Calu3 (cell line): ENCODE measurements at regions of chr4 and their contacts with region 1.

Region 1: GRCh38 chr4:183398227-183399125 is 46.0 kb upstream of the CDKN2AIP start:
- DNase-seq: peak; percentile 78
- H3K4me3 Mint-ChIP-seq: peak overlapping the region; percentile 52
- H3K27ac Mint-ChIP-seq: peak overlapping the region; percentile 81
- H3K4me1 Mint-ChIP-seq: peaks cover 30% of the 10 kb centered on the region
- H3K27me3 Mint-ChIP-seq: no peaks in the 10 kb centered on the region
- CTCF ChIP-seq: no peak

Region 2: GRCh38 chr4:183287309-183287659 is 111.2 kb before region 1 on chr4:
- CTCF ChIA-PET with region 1: interaction called, 6 read pairs
- intact Hi-C with region 1: loop called (anchors 2 kb)
- DNase-seq: no peak
- H3K4me3 Mint-ChIP-seq: peak overlapping the region; percentile 47
- H3K27ac Mint-ChIP-seq: peak overlapping the region; percentile 65
- H3K4me1 Mint-ChIP-seq: peaks cover 44% of the 10 kb centered on the region
- H3K27me3 Mint-ChIP-seq: no peaks in the 10 kb centered on the region
- CTCF ChIP-seq: no peak

Region 3: DNA sequence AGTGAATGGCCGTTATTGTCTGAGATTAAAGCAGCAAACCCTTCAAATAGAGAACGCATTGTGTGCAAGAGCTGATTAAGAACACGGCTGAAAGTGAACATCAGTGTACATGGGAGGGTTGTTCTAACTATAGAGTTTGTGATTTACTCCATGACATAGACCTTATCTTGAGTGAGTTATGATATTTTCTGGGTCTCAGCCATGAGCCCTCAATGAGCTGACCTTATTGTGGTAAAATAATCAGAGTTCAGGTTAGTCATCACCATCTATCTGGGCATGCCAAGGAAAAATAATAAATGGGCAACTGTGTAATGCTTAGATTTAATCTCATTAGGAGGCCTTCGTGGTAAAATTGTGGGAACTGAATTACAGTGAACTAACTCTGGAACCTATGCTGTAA is 43.1 kb before region 1 on chr4:
- CTCF ChIA-PET with region 1: interaction called, 3 read pairs
- intact Hi-C with region 1: loop called (anchors 2 kb)
- DNase-seq: peak; percentile 32
- H3K4me3 Mint-ChIP-seq: no peak overlapping the region
- H3K27ac Mint-ChIP-seq: peak overlapping the region; percentile 33
- H3K4me1 Mint-ChIP-seq: peaks cover 40% of the 10 kb centered on the region
- H3K27me3 Mint-ChIP-seq: no peaks in the 10 kb centered on the region
- CTCF ChIP-seq: no peak